K562 (cell line): ENCODE measurements at regions of chr3 and their contacts with region 1.

Region 1: GRCh38 chr3:42502429-42503250 is at the start of gene VIPR1:
- DNase-seq: peak; percentile 83 to 100 (median 99)
- ATAC-seq: peak; percentile 96
- H3K4me3 ChIP-seq: peak within 1 kb of the TSS; percentile 54
- H3K27ac ChIP-seq: no peak within 1 kb of the TSS
- H3K4me1 ChIP-seq: peaks cover 4 to 27% of the 10 kb centered on the region in 2 experiments; a peak in 4 of 5 replicates
- H3K27me3 ChIP-seq: peaks cover 23 to 52% of the 10 kb centered on the region in 2 experiments
- CTCF ChIP-seq: no peak
- EP300 ChIP-seq: no peak
- POLR2A ChIP-seq: no peak
- RAD21 ChIP-seq: no peak
- polyA plus RNA-seq, gene VIPR1: not detected

Region 2: DNA sequence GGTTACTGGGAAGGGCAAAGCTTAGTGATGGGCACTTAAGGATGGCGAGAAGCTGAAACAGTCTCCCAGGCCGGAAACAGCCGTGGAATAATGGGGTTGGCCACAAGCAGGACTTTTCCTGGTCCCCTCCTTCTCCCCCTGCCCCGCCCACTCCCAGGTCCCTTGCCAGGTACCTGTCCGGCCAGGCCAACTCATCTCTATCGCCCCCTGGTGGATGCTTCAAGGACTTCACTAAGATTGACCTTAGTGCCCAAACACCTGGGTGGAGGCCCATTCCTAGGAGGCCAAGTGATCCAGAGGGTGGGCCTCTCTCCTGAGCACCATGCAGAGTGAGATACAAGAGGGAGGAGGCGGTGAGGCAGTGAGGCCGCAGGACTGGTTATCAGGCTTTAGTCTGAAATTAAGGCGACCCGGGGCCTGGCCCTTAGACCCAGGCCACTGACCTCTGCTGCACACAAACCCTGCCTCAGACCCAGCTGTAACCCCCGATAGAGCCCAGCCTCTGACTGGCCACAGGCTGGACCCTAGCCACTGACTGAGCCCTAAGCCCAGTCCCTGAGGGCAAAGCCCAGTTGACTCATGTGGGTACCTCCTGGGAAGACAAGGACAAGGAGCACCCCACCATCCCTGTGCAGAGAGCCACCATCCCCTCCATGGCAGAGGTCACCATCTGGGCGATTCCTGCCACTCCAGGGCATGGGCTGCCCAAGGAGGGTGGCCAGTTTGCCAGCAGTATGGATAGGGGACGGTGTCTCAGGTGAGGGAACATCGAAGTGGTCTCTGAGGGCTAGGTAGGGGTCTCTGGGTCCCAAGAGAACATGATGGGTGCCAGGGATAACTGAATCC is 37.5 kb after region 1 on chr3:
- CTCF ChIA-PET with region 1: interaction called, 18 read pairs
- POLR2A ChIA-PET with region 1: no interaction called
- in situ Hi-C with region 1: no loop called
- intact Hi-C with region 1: loop called (anchors 1 kb)
- DNase-seq: peak; percentile 80 to 94 (median 89)
- ATAC-seq: peak; percentile 85
- H3K4me3 ChIP-seq: no peak overlapping the region
- H3K27ac ChIP-seq: no peak overlapping the region
- H3K4me1 ChIP-seq: peaks cover 0 to 6% of the 10 kb centered on the region in 2 experiments; a peak in 2 of 5 replicates
- H3K27me3 ChIP-seq: peaks cover 0 to 12% of the 10 kb centered on the region in 2 experiments; a peak in 2 of 5 replicates
- CTCF ChIP-seq: peak; percentile 81 to 91 (median 85)
- EP300 ChIP-seq: no peak
- POLR2A ChIP-seq: no peak
- RAD21 ChIP-seq: peak; percentile 42 to 58; a peak in 3 of 4 replicates

Region 3: GRCh38 chr3:43477600-43477999 is 975.0 kb after region 1 on chr3:
- CTCF ChIA-PET with region 1: no interaction called
- POLR2A ChIA-PET with region 1: no interaction called
- in situ Hi-C with region 1: no loop called
- intact Hi-C with region 1: no loop called
- DNase-seq: no peak
- ATAC-seq: no peak
- H3K4me3 ChIP-seq: no peak overlapping the region
- H3K27ac ChIP-seq: no peak overlapping the region
- H3K4me1 ChIP-seq: no peaks in the 10 kb centered on the region
- H3K27me3 ChIP-seq: no peaks in the 10 kb centered on the region
- CTCF ChIP-seq: no peak
- EP300 ChIP-seq: no peak
- POLR2A ChIP-seq: no peak
- RAD21 ChIP-seq: no peak